CD14-positive monocyte (primary cell): ENCODE measurements at regions of chr6 and their contacts with region 1.

Region 1: DNA sequence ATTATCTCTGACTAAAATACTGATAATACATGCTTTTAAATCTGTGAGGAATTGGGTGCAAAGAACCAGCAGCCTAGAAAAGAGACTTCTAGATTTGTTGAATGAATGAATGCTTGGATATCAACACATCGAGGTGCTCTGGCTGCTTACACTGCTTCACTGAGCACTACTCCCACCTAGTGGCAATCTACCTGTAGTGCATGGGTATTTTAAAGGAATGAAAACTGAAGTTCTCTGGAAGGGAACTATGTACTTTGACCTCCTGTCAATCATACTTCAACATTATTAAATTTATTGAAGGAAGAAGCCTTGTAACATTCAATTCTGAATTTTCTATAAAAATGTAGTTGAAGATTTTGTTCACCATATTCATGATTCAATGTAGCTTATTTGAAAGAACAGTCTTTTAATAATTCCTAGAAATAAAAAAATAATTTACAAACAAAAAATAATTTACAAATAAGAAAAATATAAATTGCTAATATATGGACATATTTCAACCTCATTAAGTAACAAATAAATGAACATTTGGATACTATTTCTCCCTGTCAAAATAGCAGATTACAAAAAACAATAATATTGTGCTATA is 111.2 kb upstream of the MMS22L start:
- DNase-seq: peak; percentile 33 to 63 (median 56)
- H3K4me3 ChIP-seq: no peak overlapping the region
- H3K4me3 Mint-ChIP-seq: no peak overlapping the region
- H3K27ac ChIP-seq: no peak overlapping the region
- H3K27ac Mint-ChIP-seq: no peak overlapping the region
- H3K4me1 ChIP-seq: no peaks in the 10 kb centered on the region
- H3K4me1 Mint-ChIP-seq: peaks cover under 1% of the 10 kb centered on the region
- H3K27me3 ChIP-seq: no peaks in the 10 kb centered on the region
- H3K27me3 Mint-ChIP-seq: peaks cover 2 to 8% (median 4%) of the 10 kb centered on the region in 3 donors
- CTCF ChIP-seq: peak; percentile 93

Region 2: GRCh38 chr6:97186416-97186999 is 207.7 kb before region 1 on chr6:
- intact Hi-C with region 1: loop called (anchors 5 kb)
- DNase-seq: peak; percentile 32 to 48 (median 47)
- H3K4me3 ChIP-seq: no peak overlapping the region
- H3K4me3 Mint-ChIP-seq: no peak overlapping the region
- H3K27ac ChIP-seq: no peak overlapping the region
- H3K27ac Mint-ChIP-seq: no peak overlapping the region
- H3K4me1 ChIP-seq: no peaks in the 10 kb centered on the region
- H3K4me1 Mint-ChIP-seq: no peaks in the 10 kb centered on the region
- H3K27me3 ChIP-seq: no peaks in the 10 kb centered on the region
- H3K27me3 Mint-ChIP-seq: peaks cover 0 to 1% (median 0%) of the 10 kb centered on the region in 3 donors
- CTCF ChIP-seq: peak; percentile 98